ENCODE measurements at regions of chr6 and their contacts with region 1.

Region 1: DNA sequence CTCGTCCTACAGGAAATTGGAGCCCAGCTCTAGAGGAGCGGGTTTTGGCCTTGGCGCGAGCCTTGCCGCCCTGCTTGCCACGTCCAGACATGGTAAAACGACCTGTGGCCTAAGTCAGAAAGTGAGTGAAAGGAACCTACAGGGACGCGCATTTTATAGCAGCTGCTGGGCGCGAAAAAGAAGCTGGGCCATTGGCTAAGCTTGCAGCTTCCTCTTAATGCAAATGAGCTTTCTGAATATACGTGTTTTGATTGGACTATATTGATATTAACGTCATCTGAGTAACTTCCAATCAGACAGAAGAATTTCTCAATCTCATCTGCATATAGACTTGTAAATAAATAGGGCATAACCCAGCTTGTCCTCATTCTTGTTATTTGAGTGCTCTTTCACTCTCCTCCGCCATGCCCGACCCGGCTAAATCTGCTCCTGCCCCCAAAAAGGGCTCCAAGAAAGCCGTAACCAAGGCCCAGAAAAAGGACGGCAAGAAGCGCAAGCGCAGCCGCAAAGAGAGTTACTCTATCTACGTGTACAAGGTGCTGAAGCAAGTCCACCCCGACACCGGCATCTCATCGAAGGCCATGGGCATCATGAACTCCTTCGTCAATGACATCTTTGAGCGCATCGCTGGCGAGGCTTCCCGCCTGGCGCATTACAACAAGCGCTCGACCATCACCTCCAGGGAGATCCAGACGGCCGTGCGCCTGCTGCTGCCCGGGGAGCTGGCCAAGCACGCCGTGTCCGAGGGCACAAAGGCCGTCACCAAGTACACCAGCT is 18.9 kb downstream of the OR2B2 start:
- DNase-seq: peak; percentile 94
- H3K4me3 ChIP-seq: peak overlapping the region; percentile 91
- H3K27ac ChIP-seq: peak overlapping the region; percentile 91
- H3K27me3 ChIP-seq: no peaks in the 10 kb centered on the region
- CTCF ChIP-seq: no peak

Region 2: GRCh38 chr6:26045065-26045927 is 1848.0 kb before region 1 on chr6:
- CTCF ChIA-PET with region 1: no interaction called
- POLR2A ChIA-PET with region 1: interaction called, 11 read pairs
- DNase-seq: peak; percentile 82
- H3K4me3 ChIP-seq: peak overlapping the region; percentile 66
- H3K27ac ChIP-seq: peak overlapping the region; percentile 63
- H3K27me3 ChIP-seq: no peaks in the 10 kb centered on the region
- CTCF ChIP-seq: peak; percentile 19; the same call in 1 of the 2 replicates

Region 3: DNA sequence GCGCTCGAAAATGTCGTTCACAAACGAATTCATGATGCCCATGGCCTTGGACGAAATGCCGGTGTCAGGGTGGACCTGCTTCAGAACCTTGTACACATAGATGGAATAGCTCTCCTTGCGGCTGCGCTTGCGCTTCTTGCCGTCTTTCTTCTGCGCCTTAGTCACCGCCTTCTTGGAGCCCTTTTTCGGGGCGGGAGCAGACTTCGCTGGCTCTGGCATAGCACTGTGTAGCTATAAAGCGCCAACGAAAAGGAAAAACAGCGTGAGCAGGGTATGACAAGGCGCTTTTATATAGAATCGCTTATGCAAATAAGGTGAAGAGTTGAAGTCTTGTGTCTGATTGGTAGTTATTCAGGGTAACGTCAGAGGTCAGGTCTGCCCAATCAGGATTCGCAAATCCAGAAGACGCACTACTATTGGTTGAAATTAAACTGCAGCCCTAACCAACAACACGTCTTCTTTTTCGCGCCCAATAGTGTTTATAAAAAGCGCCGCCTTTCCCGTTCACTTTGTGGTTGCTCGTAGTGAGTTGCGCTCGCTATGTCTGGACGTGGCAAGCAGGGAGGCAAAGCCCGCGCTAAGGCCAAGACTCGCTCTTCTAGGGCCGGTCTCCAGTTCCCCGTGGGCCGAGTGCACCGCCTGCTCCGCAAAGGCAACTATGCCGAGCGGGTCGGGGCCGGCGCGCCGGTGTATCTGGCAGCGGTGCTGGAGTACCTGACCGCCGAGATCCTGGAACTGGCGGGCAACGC is 760.5 kb before region 1 on chr6:
- CTCF ChIA-PET with region 1: interaction called, 10 read pairs
- POLR2A ChIA-PET with region 1: interaction called, 40 read pairs
- DNase-seq: peak; percentile 100
- H3K4me3 ChIP-seq: peak overlapping the region; percentile 70
- H3K27ac ChIP-seq: peak overlapping the region; percentile 96
- H3K27me3 ChIP-seq: no peaks in the 10 kb centered on the region
- CTCF ChIP-seq: no peak

Region 4: DNA sequence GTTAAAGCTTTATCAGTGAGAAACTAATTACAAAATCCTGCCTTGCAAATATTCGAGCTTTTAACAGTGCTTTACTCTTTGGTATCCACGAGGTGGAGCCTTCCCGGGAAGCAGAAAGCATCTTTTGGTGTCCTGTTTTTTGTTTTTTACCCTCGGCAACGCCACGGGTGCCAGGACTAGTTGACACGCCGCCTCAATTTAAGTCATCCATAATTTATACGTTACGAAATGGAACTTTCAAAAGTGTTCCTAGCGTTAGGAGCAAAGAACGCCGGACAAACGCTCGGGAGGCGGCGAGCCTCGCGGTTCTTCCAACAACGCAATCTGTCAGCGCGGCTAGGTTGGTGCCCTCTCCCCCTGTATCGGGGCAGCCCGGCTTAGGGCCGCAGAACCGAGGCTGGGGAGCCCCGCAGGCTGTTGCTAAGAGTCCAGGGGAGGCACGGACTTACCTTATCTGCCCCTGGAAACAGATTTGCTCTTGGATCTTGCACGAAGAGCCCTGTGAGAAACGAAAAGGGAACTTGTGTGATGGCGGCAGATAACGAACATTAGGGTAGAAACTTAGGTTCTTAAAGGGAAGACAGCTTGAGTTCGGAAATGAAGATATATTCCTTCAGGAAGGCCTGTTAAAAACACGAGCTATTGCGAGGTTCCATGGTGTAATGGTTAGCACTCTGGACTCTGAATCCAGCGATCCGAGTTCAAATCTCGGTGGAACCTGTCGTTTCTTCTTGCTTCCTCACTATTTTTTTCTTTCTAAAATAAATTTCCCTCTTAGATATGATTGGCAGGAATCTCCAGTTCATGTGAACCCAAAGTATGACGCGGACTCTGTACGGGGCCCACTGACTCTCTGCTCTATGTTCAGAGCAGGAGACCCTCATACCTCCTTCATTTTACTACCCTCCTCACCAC is 374.1 kb before region 1 on chr6:
- CTCF ChIA-PET with region 1: interaction called, 13 read pairs
- POLR2A ChIA-PET with region 1: no interaction called
- DNase-seq: peak; percentile 79
- H3K4me3 ChIP-seq: peak overlapping the region; percentile 93
- H3K27ac ChIP-seq: peak overlapping the region; percentile 77
- H3K27me3 ChIP-seq: peaks cover 11% of the 10 kb centered on the region
- CTCF ChIP-seq: peak; percentile 79

Region 5: DNA sequence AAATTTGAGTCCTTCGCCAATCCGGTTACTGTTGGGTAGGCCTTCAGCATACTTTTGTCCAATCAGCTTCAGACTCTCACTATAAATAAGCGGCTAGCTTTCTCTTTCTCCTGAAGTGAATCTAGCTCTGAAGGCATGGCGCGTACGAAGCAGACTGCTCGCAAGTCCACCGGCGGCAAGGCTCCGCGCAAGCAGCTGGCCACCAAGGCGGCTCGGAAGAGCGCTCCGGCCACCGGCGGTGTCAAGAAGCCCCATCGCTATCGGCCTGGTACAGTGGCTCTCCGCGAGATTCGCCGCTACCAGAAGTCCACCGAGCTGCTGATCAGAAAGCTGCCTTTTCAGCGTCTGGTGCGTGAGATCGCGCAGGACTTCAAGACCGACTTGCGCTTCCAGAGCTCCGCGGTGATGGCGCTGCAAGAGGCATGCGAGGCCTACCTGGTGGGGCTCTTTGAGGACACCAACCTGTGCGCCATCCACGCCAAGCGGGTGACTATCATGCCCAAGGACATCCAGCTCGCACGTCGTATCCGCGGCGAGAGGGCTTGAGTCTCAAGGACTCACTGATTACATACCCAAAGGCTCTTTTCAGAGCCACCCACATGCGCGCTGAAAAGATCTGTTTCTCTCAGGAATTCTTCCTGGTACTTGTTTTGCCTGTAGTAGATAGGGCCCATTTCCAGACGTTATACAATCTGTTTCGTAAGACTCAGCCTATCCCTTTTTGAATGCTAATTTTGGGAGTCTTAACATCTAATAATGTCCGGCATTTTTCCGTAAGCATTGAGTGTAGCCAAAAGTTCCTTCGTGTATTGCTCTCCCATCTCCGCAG is 83.1 kb before region 1 on chr6:
- CTCF ChIA-PET with region 1: interaction called, 57 read pairs
- POLR2A ChIA-PET with region 1: interaction called, 167 read pairs
- DNase-seq: peak; percentile 95
- H3K4me3 ChIP-seq: peak overlapping the region; percentile 85
- H3K27ac ChIP-seq: peak overlapping the region; percentile 96
- H3K27me3 ChIP-seq: no peaks in the 10 kb centered on the region
- CTCF ChIP-seq: peak; percentile 24

Region 6: DNA sequence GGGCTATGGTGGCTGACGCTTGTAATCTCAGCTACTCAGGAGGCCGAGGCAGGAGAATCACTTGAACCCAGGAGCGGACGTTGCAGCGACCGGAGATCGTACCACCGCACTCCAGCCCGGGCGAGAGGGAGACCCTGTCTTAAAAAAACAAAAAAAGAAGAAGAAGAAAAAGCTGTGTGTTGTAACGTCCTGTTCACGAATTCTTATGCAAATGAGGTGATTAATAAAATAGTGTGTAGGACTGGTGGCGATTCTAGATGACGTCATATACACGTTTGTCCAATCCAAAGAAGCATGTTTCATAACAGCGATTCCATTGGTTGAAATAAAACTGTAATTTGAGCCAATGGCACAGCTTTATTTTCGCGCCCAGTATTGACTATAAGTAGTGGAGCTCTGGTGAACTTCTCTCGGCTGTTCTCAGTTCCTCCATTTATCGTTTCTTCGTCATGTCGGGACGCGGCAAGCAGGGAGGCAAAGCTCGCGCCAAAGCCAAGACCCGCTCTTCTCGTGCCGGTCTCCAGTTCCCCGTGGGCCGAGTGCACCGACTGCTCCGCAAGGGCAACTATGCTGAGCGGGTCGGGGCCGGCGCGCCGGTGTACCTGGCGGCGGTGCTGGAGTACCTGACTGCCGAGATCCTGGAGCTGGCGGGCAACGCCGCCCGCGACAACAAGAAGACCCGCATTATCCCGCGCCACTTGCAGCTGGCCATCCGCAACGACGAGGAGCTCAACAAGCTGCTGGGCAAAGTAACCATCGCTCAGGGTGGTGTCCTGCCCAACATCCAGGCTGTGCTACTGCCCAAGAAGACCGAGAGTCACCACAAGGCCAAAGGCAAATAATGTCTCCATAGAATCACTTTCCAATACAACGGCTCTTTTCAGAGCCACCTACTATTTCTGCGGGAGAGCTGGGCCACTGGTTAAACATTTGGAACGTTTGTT is 28.1 kb before region 1 on chr6:
- CTCF ChIA-PET with region 1: interaction called, 20 read pairs
- POLR2A ChIA-PET with region 1: interaction called, 149 read pairs
- DNase-seq: peak; percentile 94
- H3K4me3 ChIP-seq: peak overlapping the region; percentile 75
- H3K27ac ChIP-seq: peak overlapping the region; percentile 96
- H3K27me3 ChIP-seq: no peaks in the 10 kb centered on the region
- CTCF ChIP-seq: no peak